OCI-LY7 (cell line): ENCODE measurements at regions of chr17 and their contacts with region 1.

Region 1: GRCh38 chr17:14427900-14428647 is 127.2 kb downstream of the HS3ST3B1 start:
- DNase-seq: peak; percentile 92
- H3K4me3 ChIP-seq: peak overlapping the region; percentile 56
- H3K27ac ChIP-seq: peak overlapping the region; percentile 98
- H3K4me1 ChIP-seq: peaks cover 46% of the 10 kb centered on the region
- CTCF ChIP-seq: no peak

Region 2: GRCh38 chr17:14330486-14331029 is 97.5 kb before region 1 on chr17:
- CTCF ChIA-PET with region 1: no interaction called
- POLR2A ChIA-PET with region 1: no interaction called
- intact Hi-C with region 1: no loop called
- DNase-seq: no peak
- H3K4me3 ChIP-seq: no peak overlapping the region
- H3K27ac ChIP-seq: no peak overlapping the region
- H3K4me1 ChIP-seq: peaks cover 7% of the 10 kb centered on the region
- CTCF ChIP-seq: no peak

Region 3: GRCh38 chr17:14359163-14360020 is 68.7 kb before region 1 on chr17:
- CTCF ChIA-PET with region 1: interaction called, 3 read pairs
- POLR2A ChIA-PET with region 1: interaction called, 6 read pairs
- intact Hi-C with region 1: loop called (anchors 2 kb)
- DNase-seq: peak; percentile 93
- H3K4me3 ChIP-seq: peak overlapping the region; percentile 35
- H3K27ac ChIP-seq: peak overlapping the region; percentile 78
- H3K4me1 ChIP-seq: peaks cover 60% of the 10 kb centered on the region
- CTCF ChIP-seq: peak; percentile 73

Region 4: GRCh38 chr17:14557480-14557879 is 129.4 kb after region 1 on chr17:
- CTCF ChIA-PET with region 1: no interaction called
- POLR2A ChIA-PET with region 1: interaction called, 6 read pairs
- intact Hi-C with region 1: loop called (anchors 5 kb)
- DNase-seq: peak; percentile 63
- H3K4me3 ChIP-seq: no peak overlapping the region
- H3K27ac ChIP-seq: peak overlapping the region; percentile 96
- H3K4me1 ChIP-seq: peaks cover 70% of the 10 kb centered on the region
- CTCF ChIP-seq: no peak

Region 5: GRCh38 chr17:14616528-14616927 is 188.5 kb after region 1 on chr17:
- CTCF ChIA-PET with region 1: no interaction called
- POLR2A ChIA-PET with region 1: no interaction called
- intact Hi-C with region 1: loop called (anchors 10 kb)
- DNase-seq: no peak
- H3K4me3 ChIP-seq: no peak overlapping the region
- H3K27ac ChIP-seq: no peak overlapping the region
- H3K4me1 ChIP-seq: peaks cover 20% of the 10 kb centered on the region
- CTCF ChIP-seq: no peak

Region 6: GRCh38 chr17:14784997-14785696 is 357.1 kb after region 1 on chr17:
- CTCF ChIA-PET with region 1: no interaction called
- POLR2A ChIA-PET with region 1: no interaction called
- intact Hi-C with region 1: loop called (anchors 10 kb)
- DNase-seq: peak; percentile 65
- H3K4me3 ChIP-seq: no peak overlapping the region
- H3K27ac ChIP-seq: peak overlapping the region; percentile 68
- H3K4me1 ChIP-seq: peaks cover 32% of the 10 kb centered on the region
- CTCF ChIP-seq: peak; percentile 61